ENCODE measurements at regions of chr3 and their contacts with region 1.

Region 1: DNA sequence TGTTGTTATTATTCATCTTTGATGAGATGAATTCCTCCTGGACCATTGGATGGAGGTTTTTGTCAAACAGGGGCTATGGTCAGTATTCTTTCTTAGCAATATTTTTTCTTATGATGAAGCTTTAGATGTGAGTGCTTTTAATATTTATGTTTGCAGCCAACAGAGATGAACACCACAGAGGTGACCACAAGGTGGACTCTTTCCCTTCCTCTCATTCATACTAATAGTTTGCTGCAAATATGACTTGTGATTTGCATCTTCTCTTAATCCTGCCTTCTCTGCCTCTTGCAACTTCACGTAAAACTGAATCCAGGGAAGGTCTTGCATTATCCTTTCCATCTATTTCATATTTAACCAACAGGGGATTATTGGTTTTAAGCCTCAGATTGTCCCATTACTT is 473.1 kb upstream of the UBE2E2 start:
- DNase-seq: peak; percentile 48
- ATAC-seq: peak; percentile 86
- H3K4me3 ChIP-seq: no peak overlapping the region
- H3K27ac ChIP-seq: no peak overlapping the region
- H3K4me1 ChIP-seq: peaks cover 10% of the 10 kb centered on the region
- H3K27me3 ChIP-seq: no peaks in the 10 kb centered on the region
- CTCF ChIP-seq: peak; percentile 64

Region 2: DNA sequence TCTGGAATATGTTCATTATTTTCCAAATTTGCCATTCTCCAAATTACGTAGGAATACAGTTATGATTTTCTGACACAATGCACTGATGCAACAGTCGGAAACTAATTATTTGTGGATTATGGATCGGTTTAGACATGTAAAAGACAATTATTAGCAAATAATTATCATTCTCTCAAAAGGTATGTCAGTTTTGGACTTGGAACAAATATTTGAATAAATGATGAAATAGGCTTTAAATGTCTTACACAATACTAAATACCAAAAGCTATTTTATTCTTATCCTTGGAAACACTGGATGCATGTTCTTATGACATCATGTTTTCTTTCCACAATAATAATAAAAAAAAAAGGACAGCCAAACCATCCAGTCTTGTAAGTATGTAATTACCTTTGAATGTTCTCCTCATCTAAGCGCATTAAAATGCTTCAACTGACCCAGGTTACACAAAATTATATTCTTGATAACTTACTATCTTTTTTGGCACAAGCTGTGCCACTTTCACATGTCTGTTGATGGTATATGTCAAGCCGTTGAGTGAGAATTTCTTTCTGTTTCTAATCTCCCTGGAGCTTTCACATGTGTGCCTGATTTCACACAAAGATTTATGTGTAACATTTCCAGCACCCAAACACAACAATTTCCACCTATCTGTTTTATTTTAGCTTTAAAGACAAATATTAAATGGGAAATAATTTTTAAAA is 740.5 kb before region 1 on chr3:
- CTCF ChIA-PET with region 1: no interaction called
- POLR2A ChIA-PET with region 1: no interaction called
- intact Hi-C with region 1: no loop called
- DNase-seq: no peak
- ATAC-seq: no peak
- H3K4me3 ChIP-seq: no peak overlapping the region
- H3K27ac ChIP-seq: no peak overlapping the region
- H3K4me1 ChIP-seq: no peaks in the 10 kb centered on the region
- H3K27me3 ChIP-seq: no peaks in the 10 kb centered on the region
- CTCF ChIP-seq: no peak

Region 3: DNA sequence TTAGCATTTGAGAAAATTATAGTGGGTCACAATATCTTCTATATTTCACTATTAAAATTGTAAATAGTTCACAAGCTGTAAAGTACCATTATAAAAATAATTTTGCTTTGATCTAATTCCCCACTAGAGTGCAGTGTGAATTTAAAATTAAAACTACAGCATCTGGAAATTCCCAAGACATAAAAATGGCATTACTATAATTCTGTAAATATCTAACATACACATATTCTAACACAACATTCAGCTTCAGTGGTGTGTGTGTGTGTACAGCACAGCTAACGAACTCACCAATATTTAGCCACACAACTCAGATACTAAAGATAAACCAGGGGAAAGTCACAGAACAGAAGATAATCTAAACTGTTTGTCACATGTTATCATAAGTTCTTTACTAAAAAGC is 554.0 kb before region 1 on chr3:
- CTCF ChIA-PET with region 1: no interaction called
- POLR2A ChIA-PET with region 1: no interaction called
- intact Hi-C with region 1: no loop called
- DNase-seq: peak; percentile 44
- ATAC-seq: peak; percentile 46; the same call in 1 of the 2 replicates
- H3K4me3 ChIP-seq: no peak overlapping the region
- H3K27ac ChIP-seq: no peak overlapping the region
- H3K4me1 ChIP-seq: no peaks in the 10 kb centered on the region
- H3K27me3 ChIP-seq: no peaks in the 10 kb centered on the region
- CTCF ChIP-seq: peak; percentile 56

Region 4: GRCh38 chr3:22887664-22888291 is 157.8 kb after region 1 on chr3:
- CTCF ChIA-PET with region 1: interaction called, 11 read pairs
- POLR2A ChIA-PET with region 1: no interaction called
- intact Hi-C with region 1: loop called (anchors 1 kb)
- DNase-seq: peak; percentile 59
- ATAC-seq: peak; percentile 70
- H3K4me3 ChIP-seq: no peak overlapping the region
- H3K27ac ChIP-seq: no peak overlapping the region
- H3K4me1 ChIP-seq: peaks cover 10% of the 10 kb centered on the region
- H3K27me3 ChIP-seq: peaks cover 22% of the 10 kb centered on the region
- CTCF ChIP-seq: peak; percentile 90

Region 5: DNA sequence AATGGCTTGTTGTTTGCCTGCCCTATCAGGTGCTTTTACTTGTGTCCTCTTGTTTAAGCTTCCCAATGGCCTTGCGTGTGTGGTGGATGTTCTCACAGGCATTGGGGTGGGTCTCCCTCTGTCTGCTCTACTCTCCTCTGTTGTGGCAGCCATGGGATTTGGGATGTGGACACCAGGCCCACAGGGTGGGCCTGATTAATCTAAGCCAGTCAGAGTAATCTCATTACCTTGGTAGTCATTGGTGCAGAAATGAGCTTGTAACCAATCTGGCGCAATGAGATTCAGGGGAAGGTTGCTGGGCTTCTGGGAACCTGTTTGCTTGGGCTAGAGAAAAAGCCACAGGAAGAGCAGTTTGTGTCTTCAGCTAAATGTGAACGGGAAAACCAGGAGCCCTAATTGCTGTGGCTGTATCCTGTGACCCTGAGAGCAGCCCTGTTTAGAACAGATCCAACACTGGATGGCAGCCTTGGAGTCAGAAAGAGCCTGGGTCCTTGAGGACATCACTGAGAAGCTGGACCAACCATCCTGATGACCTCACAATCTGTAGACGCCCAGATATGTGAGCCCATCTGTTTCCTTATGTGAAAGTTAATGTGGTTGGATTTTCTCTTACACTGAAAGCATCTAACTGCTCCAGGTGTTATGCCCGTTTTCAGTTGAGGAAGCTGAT is 918.5 kb after region 1 on chr3:
- CTCF ChIA-PET with region 1: no interaction called
- POLR2A ChIA-PET with region 1: no interaction called
- intact Hi-C with region 1: no loop called
- DNase-seq: peak; percentile 32
- ATAC-seq: no peak
- H3K4me3 ChIP-seq: no peak overlapping the region
- H3K27ac ChIP-seq: no peak overlapping the region
- H3K4me1 ChIP-seq: peaks cover 42% of the 10 kb centered on the region
- H3K27me3 ChIP-seq: no peaks in the 10 kb centered on the region
- CTCF ChIP-seq: peak; percentile 44; the same call in 1 of the 2 replicates